ENCODE measurements at regions of chr22 and their contacts with region 1.

Region 1: DNA sequence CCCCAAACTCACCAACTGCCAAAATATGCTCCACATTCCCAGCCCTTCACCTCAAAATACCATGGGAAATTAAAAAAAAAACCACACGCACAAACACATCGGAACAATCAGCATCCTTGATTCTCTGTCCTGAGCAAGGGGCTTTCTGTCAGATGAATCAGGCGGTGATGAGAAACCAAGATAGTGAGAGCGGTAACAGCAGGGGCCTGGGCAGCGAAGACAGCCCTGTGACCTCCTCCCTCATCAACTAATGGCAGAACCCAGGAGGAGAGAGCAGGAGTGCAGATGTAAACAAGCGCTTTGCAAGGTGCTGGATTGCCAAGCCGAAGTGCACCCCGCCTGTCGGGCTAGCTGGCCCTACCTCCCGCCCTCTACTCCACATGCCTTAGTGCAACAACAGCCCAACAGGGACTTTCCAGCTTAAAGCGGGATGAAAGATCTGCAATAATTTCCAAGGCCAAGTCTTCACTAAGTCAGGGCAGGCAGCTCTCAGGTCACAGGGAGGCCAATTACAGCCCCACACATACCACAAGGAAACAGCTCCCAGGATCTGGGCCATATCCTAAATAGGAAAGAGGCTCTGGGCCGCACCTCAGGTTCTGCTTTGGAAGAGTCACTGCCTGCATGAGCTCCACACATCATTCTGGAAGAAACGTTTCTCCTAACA is 72.2 kb upstream of the BID start:
- DNase-seq: no peak
- ATAC-seq: no peak
- H3K4me3 ChIP-seq: no peak overlapping the region
- H3K4me3 Mint-ChIP-seq: no peak overlapping the region
- H3K27ac ChIP-seq: no peak overlapping the region
- H3K27ac Mint-ChIP-seq: no peak overlapping the region
- H3K4me1 ChIP-seq: peaks cover 0 to 14% of the 10 kb centered on the region in 2 experiments
- H3K4me1 Mint-ChIP-seq: peaks cover 0 to 15% (median 7%) of the 10 kb centered on the region in 3 donors
- H3K27me3 ChIP-seq: no peaks in the 10 kb centered on the region
- H3K27me3 Mint-ChIP-seq: no peaks in the 10 kb centered on the region

Region 2: DNA sequence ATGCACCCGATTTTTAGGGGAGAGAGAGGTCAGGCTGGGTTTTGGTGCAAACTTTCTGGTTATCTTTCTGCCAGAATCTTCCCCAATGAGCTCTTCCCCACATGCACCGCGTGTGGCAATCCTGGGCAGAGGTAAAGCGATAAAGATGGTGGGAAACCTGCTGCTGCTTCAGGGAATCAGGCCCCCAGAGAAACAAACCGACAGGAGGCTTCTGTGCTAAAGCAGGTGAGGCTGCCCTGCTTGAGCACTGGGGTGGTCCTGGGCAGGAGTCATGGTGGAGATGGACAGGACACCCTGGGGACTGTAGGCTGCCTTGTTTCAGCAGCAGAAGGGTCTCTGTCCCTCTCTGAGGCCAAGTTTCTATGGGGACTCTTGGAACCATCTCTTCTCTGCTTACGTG is 204.1 kb after region 1 on chr22:
- CTCF ChIA-PET with region 1: no interaction called
- POLR2A ChIA-PET with region 1: interaction called in 1 of 2 experiments, 10 read pairs
- DNase-seq: no peak
- ATAC-seq: no peak
- H3K4me3 ChIP-seq: no peak overlapping the region
- H3K4me3 Mint-ChIP-seq: no peak overlapping the region
- H3K27ac ChIP-seq: no peak overlapping the region
- H3K27ac Mint-ChIP-seq: no peak overlapping the region
- H3K4me1 ChIP-seq: no peaks in the 10 kb centered on the region
- H3K4me1 Mint-ChIP-seq: no peaks in the 10 kb centered on the region
- H3K27me3 ChIP-seq: peaks cover 2 to 13% of the 10 kb centered on the region in 2 experiments
- H3K27me3 Mint-ChIP-seq: peaks cover 0 to 17% of the 10 kb centered on the region in 2 donors

Measured in T-cell (primary cell).